ENCODE measurements at regions of chr6 and their contacts with region 1.

Region 1: GRCh38 chr6:5471044-5471443 is 209.7 kb downstream of the FARS2 start:
- DNase-seq: peak; percentile 68
- H3K4me3 Mint-ChIP-seq: no peak overlapping the region
- H3K27ac Mint-ChIP-seq: no peak overlapping the region
- H3K4me1 Mint-ChIP-seq: no peaks in the 10 kb centered on the region
- H3K27me3 Mint-ChIP-seq: no peaks in the 10 kb centered on the region

Region 2: DNA sequence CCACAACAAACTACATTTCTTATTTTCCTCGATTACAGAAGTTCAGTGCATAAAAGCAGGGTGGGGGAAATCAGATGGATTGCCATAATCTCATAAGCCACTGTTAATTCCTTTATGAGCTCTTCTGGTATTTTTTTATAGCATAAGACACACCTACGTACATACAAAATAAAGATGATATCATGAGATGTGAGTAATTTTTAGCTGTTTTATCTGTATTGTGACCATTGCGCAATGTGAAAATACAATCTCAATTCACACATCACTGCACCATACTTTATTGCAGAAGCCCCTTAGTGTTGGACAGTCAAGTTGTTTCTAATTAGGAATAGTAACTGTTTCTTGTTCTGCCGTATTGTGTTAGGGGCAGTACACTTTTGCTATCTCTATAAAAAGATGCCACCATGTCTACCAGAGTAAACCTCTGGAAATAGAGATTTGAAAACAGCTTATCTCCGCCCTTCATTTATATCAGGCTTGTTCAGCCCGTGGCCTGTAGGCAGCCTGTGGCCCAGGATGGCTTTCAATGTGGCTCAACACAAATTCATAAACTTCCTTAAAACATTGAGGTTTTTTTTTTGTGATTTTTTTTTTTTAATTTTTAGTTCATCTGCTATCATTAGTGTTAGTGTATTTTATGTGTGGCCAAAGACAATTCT is 119.4 kb before region 1 on chr6:
- CTCF ChIA-PET with region 1: no interaction called
- POLR2A ChIA-PET with region 1: no interaction called
- DNase-seq: no peak
- H3K4me3 Mint-ChIP-seq: no peak overlapping the region
- H3K27ac Mint-ChIP-seq: no peak overlapping the region
- H3K4me1 Mint-ChIP-seq: no peaks in the 10 kb centered on the region
- H3K27me3 Mint-ChIP-seq: no peaks in the 10 kb centered on the region

Region 3: GRCh38 chr6:5486214-5486613 is 15.2 kb after region 1 on chr6:
- CTCF ChIA-PET with region 1: interaction called, 12 read pairs
- POLR2A ChIA-PET with region 1: interaction called, 3 read pairs
- DNase-seq: no peak
- H3K4me3 Mint-ChIP-seq: no peak overlapping the region
- H3K27ac Mint-ChIP-seq: no peak overlapping the region
- H3K4me1 Mint-ChIP-seq: peaks cover 4% of the 10 kb centered on the region
- H3K27me3 Mint-ChIP-seq: no peaks in the 10 kb centered on the region

Region 4: GRCh38 chr6:5518936-5519491 is 48.0 kb after region 1 on chr6:
- CTCF ChIA-PET with region 1: interaction called, 13 read pairs
- POLR2A ChIA-PET with region 1: interaction called, 6 read pairs
- DNase-seq: peak; percentile 21
- H3K4me3 Mint-ChIP-seq: peak overlapping the region; percentile 18
- H3K27ac Mint-ChIP-seq: peak overlapping the region; percentile 75
- H3K4me1 Mint-ChIP-seq: peaks cover 58% of the 10 kb centered on the region
- H3K27me3 Mint-ChIP-seq: no peaks in the 10 kb centered on the region

Region 5: GRCh38 chr6:5599127-5599526 is 128.1 kb after region 1 on chr6:
- CTCF ChIA-PET with region 1: no interaction called
- POLR2A ChIA-PET with region 1: no interaction called
- DNase-seq: no peak
- H3K4me3 Mint-ChIP-seq: no peak overlapping the region
- H3K27ac Mint-ChIP-seq: no peak overlapping the region
- H3K4me1 Mint-ChIP-seq: no peaks in the 10 kb centered on the region
- H3K27me3 Mint-ChIP-seq: no peaks in the 10 kb centered on the region

Region 6: DNA sequence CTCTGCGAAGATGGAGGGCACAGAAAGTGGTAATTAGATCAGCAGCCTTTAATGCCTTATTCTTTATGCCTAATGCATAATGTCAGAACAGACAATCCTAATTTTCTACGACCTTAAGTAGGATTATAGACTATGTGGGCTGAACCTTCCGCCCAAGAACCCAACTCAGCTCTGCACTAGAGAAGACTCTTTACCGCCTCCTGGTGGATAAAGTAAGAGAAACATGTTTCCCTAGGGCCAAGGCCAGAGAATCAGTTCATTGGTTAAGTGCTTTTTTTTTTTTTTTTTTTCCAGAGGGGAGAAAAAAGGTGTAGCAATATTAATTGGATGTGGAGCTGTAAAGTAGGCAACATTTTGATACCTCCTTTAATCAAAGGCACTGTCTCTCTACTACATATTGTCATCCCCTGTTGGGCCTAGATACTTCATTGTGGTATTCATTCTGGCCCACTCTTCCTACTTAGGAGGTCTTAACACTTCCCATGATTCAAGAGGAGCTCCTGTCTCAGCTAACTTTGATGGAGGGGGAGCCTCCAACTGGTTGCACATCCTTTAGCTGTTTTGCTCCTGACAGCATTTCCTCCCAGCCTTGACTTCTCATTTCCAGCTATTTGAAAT is 660.6 kb after region 1 on chr6:
- CTCF ChIA-PET with region 1: interaction called, 17 read pairs
- POLR2A ChIA-PET with region 1: no interaction called
- DNase-seq: no peak
- H3K4me3 Mint-ChIP-seq: no peak overlapping the region
- H3K27ac Mint-ChIP-seq: no peak overlapping the region
- H3K4me1 Mint-ChIP-seq: no peaks in the 10 kb centered on the region
- H3K27me3 Mint-ChIP-seq: peaks cover 10% of the 10 kb centered on the region

Measured in activated CD4-positive, alpha-beta memory T cell treated with anti-CD3 and anti-CD28 coated beads, Interleukin-2, amount 10 ng/mL, durations not matched to agents 7 days and 5 days (primary cell).